Naive thymus-derived CD4-positive, alpha-beta T cell (primary cell): ENCODE measurements at regions of chr4 and their contacts with region 1.

Region 1: DNA sequence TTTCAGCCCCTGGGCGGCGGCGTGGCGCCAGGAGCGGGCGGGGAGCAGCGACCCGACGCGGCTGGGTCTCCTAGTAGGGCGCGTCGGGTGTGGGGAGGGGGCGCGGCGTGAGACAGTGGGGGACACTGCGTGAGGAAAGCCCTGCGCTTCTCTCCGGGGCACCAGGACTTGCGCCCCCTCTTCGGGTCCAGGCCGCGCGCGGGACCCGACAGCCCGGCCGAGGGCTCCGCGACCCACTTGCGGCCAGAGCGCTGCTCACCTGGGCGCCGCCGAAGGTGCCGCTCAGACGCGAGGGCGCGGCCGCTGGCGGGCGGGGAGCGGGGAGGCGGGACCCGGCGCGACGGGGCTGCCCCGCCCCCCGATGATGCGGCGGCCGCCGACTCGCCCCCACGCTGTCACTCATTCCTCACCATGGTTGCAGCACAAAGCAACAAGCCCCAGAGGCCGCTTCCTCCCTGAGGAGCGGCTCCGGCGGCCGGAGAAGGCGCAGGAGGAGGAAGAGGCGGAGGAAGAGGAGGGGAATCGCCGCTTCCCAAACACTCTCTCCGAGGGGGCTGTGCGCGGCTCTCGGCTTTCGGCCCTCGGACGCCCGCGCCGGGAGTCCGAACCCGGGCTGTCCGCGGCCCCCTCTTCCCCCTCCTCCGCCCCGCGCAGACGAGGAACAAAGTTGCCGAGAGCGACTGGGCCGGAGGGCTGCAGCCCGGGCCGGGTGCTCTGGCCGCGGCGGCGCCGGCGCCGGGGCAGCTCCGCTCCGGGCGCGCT is at the start of gene RAPGEF2:
- DNase-seq: peak; percentile 82 to 89 (median 87)
- ATAC-seq: peak; percentile 94
- H3K4me3 ChIP-seq: peak within 1 kb of the TSS; percentile 63
- H3K4me3 Mint-ChIP-seq: peak within 1 kb of the TSS; percentile 82 to 92 (median 88)
- H3K27ac ChIP-seq: peak within 1 kb of the TSS; percentile 83
- H3K27ac Mint-ChIP-seq: peak within 1 kb of the TSS; percentile 66 to 93 (median 89)
- H3K4me1 ChIP-seq: peaks cover 8 to 20% of the 10 kb centered on the region in 2 donors
- H3K4me1 Mint-ChIP-seq: peaks cover 27 to 50% (median 38%) of the 10 kb centered on the region in 7 donors
- H3K27me3 ChIP-seq: no peaks in the 10 kb centered on the region
- H3K27me3 Mint-ChIP-seq: peaks cover 0 to 8% (median 0%) of the 10 kb centered on the region in 5 donors
- total RNA-seq, gene RAPGEF2: 19.1 to 35.2 (median 21.9) TPM

Region 2: GRCh38 chr4:158722917-158723793 is 379.6 kb before region 1 on chr4 and contains the start of gene PPID:
- CTCF ChIA-PET with region 1: no interaction called
- POLR2A ChIA-PET with region 1: no interaction called
- intact Hi-C with region 1: loop called (anchors 1 kb)
- DNase-seq: peak; percentile 64 to 86 (median 71)
- ATAC-seq: peak; percentile 90
- H3K4me3 ChIP-seq: peak within 1 kb of the TSS; percentile 93
- H3K4me3 Mint-ChIP-seq: peak within 1 kb of the TSS; percentile 92 to 99 (median 98)
- H3K27ac ChIP-seq: peak within 1 kb of the TSS; percentile 89
- H3K27ac Mint-ChIP-seq: peak within 1 kb of the TSS; percentile 95 to 99 (median 99)
- H3K4me1 ChIP-seq: peaks cover 0 to 3% of the 10 kb centered on the region in 2 donors
- H3K4me1 Mint-ChIP-seq: peaks cover 16 to 47% (median 37%) of the 10 kb centered on the region in 7 donors
- H3K27me3 ChIP-seq: no peaks in the 10 kb centered on the region
- H3K27me3 Mint-ChIP-seq: peaks cover under 1 to 17% (median 7%) of the 10 kb centered on the region in 5 donors
- total RNA-seq, gene PPID: 13.4 to 46.1 (median 26.5) TPM

Region 3: DNA sequence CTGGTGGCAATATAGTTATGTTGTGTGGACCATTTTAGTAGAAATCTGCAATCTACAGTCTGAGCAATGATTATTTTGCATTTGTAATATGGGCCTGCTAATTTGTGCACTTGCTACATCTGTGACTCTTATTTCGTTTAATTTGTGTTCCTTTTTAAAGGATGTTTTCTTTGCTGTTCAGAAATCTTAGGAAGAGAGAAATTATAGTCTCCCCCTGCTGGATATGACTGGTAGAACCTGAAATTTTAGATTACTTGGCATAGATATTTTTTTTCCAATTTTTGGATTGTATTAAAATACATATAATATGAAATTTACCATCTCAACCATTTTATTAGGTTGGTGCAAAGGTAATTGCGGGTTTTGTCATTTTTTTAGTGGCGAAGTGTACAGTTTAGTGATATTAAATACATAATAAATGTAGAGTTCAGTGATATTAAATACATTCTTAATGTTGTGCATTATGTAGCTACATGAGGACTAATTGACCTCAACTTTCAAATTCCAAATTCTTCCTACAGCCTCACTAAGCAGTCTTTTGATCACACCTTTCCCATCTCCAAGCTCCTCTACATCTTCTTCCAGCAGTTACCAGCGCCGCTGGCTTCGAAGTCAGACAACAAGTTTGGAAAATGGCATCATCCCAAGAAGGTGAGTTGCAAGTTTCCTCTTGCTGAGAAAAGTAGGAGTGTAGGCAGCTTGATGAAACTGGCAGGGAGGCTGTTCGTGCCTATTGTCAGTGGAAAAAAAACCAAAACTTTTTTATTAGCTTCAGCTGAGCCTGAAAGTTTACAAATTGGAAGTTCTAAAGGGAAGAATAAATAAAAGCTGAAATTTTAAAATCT is 251.8 kb before region 1 on chr4:
- CTCF ChIA-PET with region 1: no interaction called
- POLR2A ChIA-PET with region 1: no interaction called
- intact Hi-C with region 1: loop called in 1 of 2 experiments (anchors 5 kb)
- DNase-seq: peak in 5 of 9 donors; percentile 27 to 37 (median 36)
- ATAC-seq: peak; percentile 62
- H3K4me3 ChIP-seq: no peak overlapping the region
- H3K4me3 Mint-ChIP-seq: no peak overlapping the region
- H3K27ac ChIP-seq: no peak overlapping the region
- H3K27ac Mint-ChIP-seq: no peak overlapping the region
- H3K4me1 ChIP-seq: no peaks in the 10 kb centered on the region
- H3K4me1 Mint-ChIP-seq: peaks cover 7 to 13% (median 11%) of the 10 kb centered on the region in 7 donors
- H3K27me3 ChIP-seq: no peaks in the 10 kb centered on the region
- H3K27me3 Mint-ChIP-seq: no peaks in the 10 kb centered on the region

Region 4: DNA sequence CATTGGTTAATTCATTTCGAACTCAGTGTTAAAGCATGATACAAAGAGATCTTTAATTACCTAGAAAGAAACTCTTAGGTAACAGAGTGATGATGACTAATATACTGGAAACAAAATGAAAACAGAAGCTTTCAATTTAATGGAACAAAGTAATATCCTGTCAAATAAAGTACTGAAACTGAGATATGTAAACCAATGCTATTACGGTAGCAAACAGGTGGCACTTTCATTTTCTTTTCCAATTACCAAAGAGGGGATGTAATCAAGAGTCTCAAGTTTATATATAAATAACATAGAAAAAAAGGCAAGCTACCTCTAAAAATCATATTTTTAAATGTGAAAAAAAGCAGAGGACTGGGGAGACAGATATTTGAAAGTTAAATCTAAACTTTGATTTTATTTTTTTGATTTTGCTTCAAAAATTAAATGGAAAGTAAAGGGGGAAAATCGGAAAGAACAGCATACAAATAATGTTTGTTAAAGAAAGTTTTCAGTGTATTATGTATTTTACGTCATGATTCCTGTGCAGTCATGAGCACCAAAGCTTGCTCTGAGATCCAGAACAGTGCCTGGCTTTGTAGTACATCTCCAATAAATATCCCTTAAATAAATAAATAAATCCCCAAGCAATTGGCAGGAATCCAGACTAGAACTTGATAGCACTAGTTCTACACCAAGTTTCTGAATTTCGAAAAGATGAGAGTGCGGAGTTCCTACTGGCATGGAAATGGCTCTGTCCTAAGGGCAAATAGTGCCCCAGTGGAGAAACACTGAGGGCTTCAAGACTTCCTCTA is 24.9 kb before region 1 on chr4:
- CTCF ChIA-PET with region 1: no interaction called
- POLR2A ChIA-PET with region 1: no interaction called
- intact Hi-C with region 1: loop called in 1 of 2 experiments (anchors 1 kb)
- DNase-seq: no peak
- ATAC-seq: peak; percentile 41
- H3K4me3 ChIP-seq: no peak overlapping the region
- H3K4me3 Mint-ChIP-seq: peak overlapping the region in 8 of 10 donors; percentile 38 to 66 (median 51)
- H3K27ac ChIP-seq: no peak overlapping the region
- H3K27ac Mint-ChIP-seq: peak overlapping the region in 2 of 9 donors; percentile 18 to 56
- H3K4me1 ChIP-seq: peaks cover 0 to 3% of the 10 kb centered on the region in 2 donors
- H3K4me1 Mint-ChIP-seq: peaks cover 0 to 21% (median 8%) of the 10 kb centered on the region in 7 donors
- H3K27me3 ChIP-seq: no peaks in the 10 kb centered on the region
- H3K27me3 Mint-ChIP-seq: peaks cover 0 to 2% (median 0%) of the 10 kb centered on the region in 5 donors

Region 5: DNA sequence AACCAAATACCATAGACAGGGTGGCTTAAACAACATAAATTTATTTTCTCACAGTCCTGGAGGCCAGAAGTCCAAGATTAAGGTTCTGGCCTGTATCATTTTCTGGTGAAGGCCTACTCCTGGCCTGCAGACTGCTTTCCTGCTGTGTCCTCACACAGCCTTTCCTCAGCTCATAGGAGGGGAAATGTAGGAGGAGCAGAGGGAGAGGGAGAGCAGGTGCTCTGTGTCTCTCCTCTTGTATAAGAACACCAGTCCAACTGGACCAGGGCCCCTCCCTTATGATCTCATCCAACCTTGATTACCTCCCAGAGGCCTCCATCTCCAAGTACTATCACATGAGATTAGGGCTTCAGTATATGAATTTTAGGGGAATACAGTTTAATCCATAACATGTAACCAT is 34.4 kb after region 1 on chr4:
- CTCF ChIA-PET with region 1: no interaction called
- POLR2A ChIA-PET with region 1: no interaction called
- intact Hi-C with region 1: no loop called
- DNase-seq: no peak
- ATAC-seq: no peak
- H3K4me3 ChIP-seq: no peak overlapping the region
- H3K4me3 Mint-ChIP-seq: no peak overlapping the region
- H3K27ac ChIP-seq: no peak overlapping the region
- H3K27ac Mint-ChIP-seq: no peak overlapping the region
- H3K4me1 ChIP-seq: no peaks in the 10 kb centered on the region
- H3K4me1 Mint-ChIP-seq: peaks cover 0 to 7% (median 4%) of the 10 kb centered on the region in 7 donors
- H3K27me3 ChIP-seq: no peaks in the 10 kb centered on the region
- H3K27me3 Mint-ChIP-seq: no peaks in the 10 kb centered on the region

Region 6: DNA sequence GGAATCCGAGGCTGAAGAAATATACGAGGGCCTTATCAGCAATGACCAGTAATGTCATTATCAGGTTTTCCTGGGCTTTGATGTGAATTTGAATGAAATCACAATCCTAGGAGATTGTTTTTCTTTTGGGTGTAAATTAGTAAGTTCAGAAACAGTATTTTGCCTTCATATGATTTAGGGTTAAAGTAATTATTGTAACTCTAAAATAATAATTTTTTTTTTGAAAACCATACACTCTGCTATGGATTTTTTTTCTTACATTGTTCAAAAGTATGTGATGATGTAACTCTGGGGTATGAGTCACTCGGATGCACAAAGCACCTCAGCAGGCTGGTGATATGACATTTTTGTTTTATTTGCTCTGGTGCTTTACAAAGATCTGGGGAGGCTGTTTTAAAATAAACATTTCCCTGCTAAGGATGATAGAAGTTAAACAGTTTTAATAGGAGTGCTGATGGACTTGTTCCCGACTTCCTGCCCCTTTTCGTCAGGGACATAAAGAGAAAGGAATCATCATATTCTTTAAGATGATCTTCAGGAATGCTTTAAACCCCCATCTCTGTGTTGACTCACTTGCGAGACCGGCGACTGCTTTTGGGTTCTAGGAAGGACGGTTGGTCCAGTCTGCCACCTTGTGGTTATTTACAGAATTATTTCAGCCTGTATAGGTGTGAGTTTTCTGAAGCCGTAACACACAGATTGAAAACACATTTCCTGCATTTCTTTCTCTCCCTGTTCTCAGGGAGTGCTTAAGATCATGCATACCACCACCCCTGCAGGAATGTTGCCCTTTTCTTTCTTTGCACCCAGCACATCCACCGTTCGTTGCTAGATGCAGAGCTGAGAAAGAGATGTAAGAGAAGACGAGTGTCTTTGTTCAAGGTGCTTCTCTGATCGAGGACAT is 72.5 kb after region 1 on chr4:
- CTCF ChIA-PET with region 1: no interaction called
- POLR2A ChIA-PET with region 1: no interaction called
- intact Hi-C with region 1: loop called (anchors 1 kb)
- DNase-seq: peak; percentile 9 to 76 (median 69)
- ATAC-seq: peak; percentile 91
- H3K4me3 ChIP-seq: no peak overlapping the region
- H3K4me3 Mint-ChIP-seq: peak overlapping the region in 3 of 10 donors; percentile 0 to 45 (median 24)
- H3K27ac ChIP-seq: no peak overlapping the region
- H3K27ac Mint-ChIP-seq: peak overlapping the region in 2 of 9 donors; percentile 6 to 76
- H3K4me1 ChIP-seq: peaks cover 0 to 4% of the 10 kb centered on the region in 2 donors
- H3K4me1 Mint-ChIP-seq: peaks cover 13 to 63% (median 31%) of the 10 kb centered on the region in 7 donors
- H3K27me3 ChIP-seq: no peaks in the 10 kb centered on the region
- H3K27me3 Mint-ChIP-seq: peaks cover 0 to 8% (median 0%) of the 10 kb centered on the region in 5 donors